ENCODE measurements at regions of chr4 and their contacts with region 1.

Region 1: GRCh38 chr4:2963175-2963965 is at the starts of genes GRK4 and NOP14:
- DNase-seq: peak; percentile 99
- H3K4me3 Mint-ChIP-seq: peak within 1 kb of the TSS; percentile 87
- H3K27ac Mint-ChIP-seq: peak within 1 kb of the TSS; percentile 79
- H3K4me1 Mint-ChIP-seq: peaks cover 27% of the 10 kb centered on the region
- H3K27me3 Mint-ChIP-seq: no peaks in the 10 kb centered on the region
- total RNA-seq, gene GRK4: 4.6 and 5.3 TPM in 2 replicates
- total RNA-seq, gene NOP14: 132 and 141 TPM in 2 replicates

Region 2: DNA sequence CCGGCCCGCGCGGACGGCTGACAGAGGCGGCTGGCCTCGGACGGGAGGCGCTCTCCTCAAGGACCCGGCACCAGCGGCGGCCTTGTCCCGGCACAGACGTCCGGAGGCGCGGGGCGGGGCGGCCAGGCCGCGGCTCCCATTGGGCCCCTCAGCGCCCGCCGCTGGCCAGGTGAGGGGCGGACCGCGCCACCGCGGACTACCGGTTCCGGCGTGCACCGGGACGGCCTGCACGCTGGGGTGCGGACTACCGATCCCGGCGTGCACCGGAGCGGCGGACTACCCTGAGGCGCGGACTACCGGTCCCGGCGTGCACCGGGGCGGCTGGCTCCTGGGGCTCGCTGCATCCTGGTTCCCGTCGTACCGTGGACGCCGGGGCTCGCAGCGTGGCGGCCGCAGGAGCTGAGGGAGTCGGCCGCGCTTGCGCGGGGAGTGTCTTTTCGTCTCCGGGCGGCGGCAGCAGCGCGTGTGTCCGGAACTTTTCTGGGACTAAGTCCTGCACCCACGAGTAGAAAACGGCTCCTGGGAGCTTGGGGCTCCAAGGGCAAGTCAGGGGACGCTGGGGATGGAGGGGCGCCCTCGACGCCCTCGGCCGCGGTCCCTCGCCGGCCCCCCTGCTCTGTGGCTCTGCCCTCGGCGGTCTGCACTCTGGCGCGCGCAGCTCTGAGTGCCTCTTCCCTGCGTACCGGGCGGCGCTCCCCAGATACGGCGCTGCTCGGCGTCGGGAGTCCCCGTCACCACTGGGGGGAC is 1107.2 kb before region 1 on chr4 and contains the start of gene LETM1:
- intact Hi-C with region 1: loop called (anchors 2 kb)
- DNase-seq: peak; percentile 99
- H3K4me3 Mint-ChIP-seq: peak within 1 kb of the TSS; percentile 90
- H3K27ac Mint-ChIP-seq: peak within 1 kb of the TSS; percentile 82
- H3K4me1 Mint-ChIP-seq: peaks cover 25% of the 10 kb centered on the region
- H3K27me3 Mint-ChIP-seq: no peaks in the 10 kb centered on the region
- total RNA-seq, gene LETM1: 97.2 and 98.7 TPM in 2 replicates

Region 3: GRCh38 chr4:2468445-2469192 is 494.8 kb before region 1 on chr4 and contains the start of gene RNF4:
- intact Hi-C with region 1: loop called (anchors 2 kb)
- DNase-seq: peak; percentile 98
- H3K4me3 Mint-ChIP-seq: peak within 1 kb of the TSS; percentile 90
- H3K27ac Mint-ChIP-seq: peak within 1 kb of the TSS; percentile 99
- H3K4me1 Mint-ChIP-seq: peaks cover 30% of the 10 kb centered on the region
- H3K27me3 Mint-ChIP-seq: peaks cover 4% of the 10 kb centered on the region
- total RNA-seq, gene RNF4: 94.8 and 95.4 TPM in 2 replicates

Region 4: DNA sequence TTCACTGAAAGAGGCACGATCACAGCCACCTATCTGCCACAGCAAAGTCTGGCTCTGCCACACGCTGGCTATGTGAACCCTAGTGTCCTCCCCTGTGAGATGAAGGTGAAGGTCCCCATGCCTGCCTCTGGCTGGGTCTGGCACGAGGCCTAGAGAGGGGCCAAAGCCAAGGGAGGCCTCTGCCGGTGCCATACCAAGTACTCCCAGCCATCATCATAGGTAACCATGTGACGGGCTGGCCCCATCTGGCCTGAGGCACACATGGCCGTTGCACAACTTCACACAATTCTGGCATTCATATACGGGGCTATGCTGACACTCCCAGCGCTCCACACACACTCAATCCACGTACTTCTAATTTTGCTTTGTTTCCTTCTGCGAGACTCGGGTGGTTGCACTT is 15.4 kb before region 1 on chr4:
- intact Hi-C with region 1: no loop called
- DNase-seq: no peak
- H3K4me3 Mint-ChIP-seq: no peak overlapping the region
- H3K27ac Mint-ChIP-seq: peak overlapping the region; percentile 49
- H3K4me1 Mint-ChIP-seq: peaks cover 26% of the 10 kb centered on the region
- H3K27me3 Mint-ChIP-seq: no peaks in the 10 kb centered on the region

Region 5: GRCh38 chr4:3037957-3038461 is 74.6 kb after region 1 on chr4:
- intact Hi-C with region 1: loop called (anchors 1 kb)
- DNase-seq: peak; percentile 73
- H3K4me3 Mint-ChIP-seq: peak overlapping the region; percentile 74
- H3K27ac Mint-ChIP-seq: peak overlapping the region; percentile 58
- H3K4me1 Mint-ChIP-seq: peaks cover 37% of the 10 kb centered on the region
- H3K27me3 Mint-ChIP-seq: peaks cover 10% of the 10 kb centered on the region

Region 6: GRCh38 chr4:3531879-3532713 is 568.7 kb after region 1 on chr4 and contains the start of gene LRPAP1:
- intact Hi-C with region 1: loop called (anchors 5 kb)
- DNase-seq: peak; percentile 96
- H3K4me3 Mint-ChIP-seq: peak within 1 kb of the TSS; percentile 100
- H3K27ac Mint-ChIP-seq: peak within 1 kb of the TSS; percentile 97
- H3K4me1 Mint-ChIP-seq: peaks cover 21% of the 10 kb centered on the region
- H3K27me3 Mint-ChIP-seq: peaks cover 15% of the 10 kb centered on the region
- total RNA-seq, gene LRPAP1: 76.1 and 81.6 TPM in 2 replicates